ENCODE measurements at regions of chr1 and their contacts with region 1.

Region 1: GRCh38 chr1:95233737-95234500 is at the start of gene RWDD3:
- DNase-seq: peak; percentile 65 to 88
- ATAC-seq: peak; percentile 95 to 97
- H3K4me3 ChIP-seq: peak within 1 kb of the TSS; percentile 98
- H3K27ac ChIP-seq: peak within 1 kb of the TSS; percentile 92 to 100
- H3K4me1 ChIP-seq: peaks cover 16% of the 10 kb centered on the region
- CTCF ChIP-seq: peak; percentile 69
- EP300 ChIP-seq: no peak
- POLR2A ChIP-seq: peak; percentile 68
- RAD21 ChIP-seq: peak; percentile 67 to 89; a peak in 4 of 5 replicates
- polyA plus RNA-seq, gene RWDD3: 15.7 and 22.1 TPM in 2 replicates

Region 2: DNA sequence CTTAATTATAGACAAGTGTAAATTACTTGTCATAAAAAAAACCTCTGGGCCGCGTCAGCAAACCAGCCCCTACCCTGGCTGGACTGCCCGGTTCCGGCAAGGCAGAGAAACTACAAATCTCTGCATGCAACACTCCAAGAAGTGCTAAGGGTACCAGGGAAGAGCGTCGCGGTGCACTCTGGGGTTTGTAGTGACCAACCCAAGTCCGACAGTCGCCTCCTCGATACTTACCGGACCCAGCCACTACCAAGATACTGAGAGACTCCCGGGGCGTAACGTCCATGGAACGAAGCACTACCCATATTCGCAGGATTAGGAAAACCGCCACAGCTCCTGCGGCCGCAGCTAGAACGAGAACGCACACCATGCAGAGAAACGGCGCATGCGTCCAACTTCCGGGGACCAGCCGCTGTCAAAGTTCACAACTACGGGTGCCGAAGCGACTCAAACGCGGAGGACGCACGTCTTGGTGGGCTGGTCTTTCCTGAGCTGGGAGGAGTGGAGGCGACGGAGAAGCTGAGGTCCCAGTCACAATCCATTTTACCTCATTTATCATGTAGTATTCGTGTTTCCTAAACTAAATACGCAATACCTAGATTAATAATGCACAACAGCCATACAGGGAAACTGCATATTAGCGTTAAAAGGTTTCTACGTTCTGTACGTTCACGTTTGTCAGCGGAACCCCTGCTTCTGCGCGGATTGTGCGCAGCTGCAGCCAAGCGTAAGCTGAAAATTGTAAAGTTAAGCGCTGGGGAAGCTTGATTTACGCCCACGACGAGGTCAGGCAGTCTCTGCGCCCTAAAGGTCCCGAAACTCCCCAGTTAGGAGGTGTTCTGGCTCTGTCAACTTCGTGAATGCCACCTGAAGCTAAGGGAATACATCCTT is 161.1 kb before region 1 on chr1 and contains the start of gene ALG14:
- CTCF ChIA-PET with region 1: interaction called, 10 read pairs
- POLR2A ChIA-PET with region 1: interaction called, 31 read pairs
- DNase-seq: peak; percentile 83 to 95
- ATAC-seq: peak; percentile 99
- H3K4me3 ChIP-seq: peak within 1 kb of the TSS; percentile 62
- H3K27ac ChIP-seq: peak within 1 kb of the TSS; percentile 98 to 100
- H3K4me1 ChIP-seq: peaks cover 27% of the 10 kb centered on the region
- CTCF ChIP-seq: no peak
- EP300 ChIP-seq: no peak
- POLR2A ChIP-seq: peak; percentile 56
- RAD21 ChIP-seq: no peak; a peak in 2 of 5 replicates
- polyA plus RNA-seq, gene ALG14: 5.0 and 5.3 TPM in 2 replicates

Region 3: DNA sequence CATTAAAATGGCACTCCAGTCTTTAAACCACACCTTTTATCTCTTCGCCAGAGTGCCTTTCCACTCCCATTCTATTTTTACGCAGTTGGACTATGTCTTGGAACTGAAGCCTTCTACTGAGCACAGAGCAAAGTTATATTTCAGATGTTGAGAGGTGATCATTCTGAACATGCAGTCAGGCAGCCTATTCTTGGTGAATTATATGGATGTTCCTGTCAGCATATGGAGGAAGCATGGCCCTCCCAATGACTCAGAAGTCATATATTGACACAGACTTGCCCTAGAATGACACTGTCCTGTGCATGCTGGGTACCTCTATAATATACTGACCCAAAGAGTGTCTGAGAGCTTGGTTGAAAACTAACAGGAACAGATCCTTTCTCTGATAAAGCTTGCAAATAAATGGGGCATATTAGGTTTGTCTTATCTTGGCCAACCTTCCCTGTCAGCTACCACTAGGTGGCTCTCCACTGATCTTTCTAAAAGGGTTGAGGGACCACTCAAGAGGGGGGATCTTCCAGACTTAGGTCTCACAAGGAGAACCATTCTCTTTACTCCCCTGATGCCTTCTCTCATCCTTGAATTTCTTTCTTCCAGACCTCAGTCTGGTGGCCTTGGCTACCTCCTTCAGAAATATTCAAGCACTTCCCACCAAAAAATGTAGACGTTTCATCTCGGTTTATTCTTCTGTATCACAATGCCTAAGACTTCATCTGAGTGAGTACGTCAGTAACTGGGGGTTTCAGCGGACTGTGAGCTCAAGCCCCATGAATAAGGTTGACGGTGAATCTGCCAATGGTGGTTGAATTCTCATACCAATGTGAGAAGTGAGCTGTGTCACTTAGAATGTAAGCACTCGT is 149.4 kb before region 1 on chr1:
- CTCF ChIA-PET with region 1: interaction called, 14 read pairs
- POLR2A ChIA-PET with region 1: interaction called, 6 read pairs
- DNase-seq: peak; percentile 46 to 55
- ATAC-seq: peak; percentile 48 to 64; a peak in 3 of 6 replicates
- H3K4me3 ChIP-seq: no peak overlapping the region
- H3K27ac ChIP-seq: peak overlapping the region; percentile 36 to 81; a peak in 4 of 6 replicates
- H3K4me1 ChIP-seq: peaks cover 53% of the 10 kb centered on the region
- CTCF ChIP-seq: peak; percentile 49
- EP300 ChIP-seq: no peak
- POLR2A ChIP-seq: no peak
- RAD21 ChIP-seq: peak; percentile 27 to 45; a peak in 3 of 5 replicates

Region 4: DNA sequence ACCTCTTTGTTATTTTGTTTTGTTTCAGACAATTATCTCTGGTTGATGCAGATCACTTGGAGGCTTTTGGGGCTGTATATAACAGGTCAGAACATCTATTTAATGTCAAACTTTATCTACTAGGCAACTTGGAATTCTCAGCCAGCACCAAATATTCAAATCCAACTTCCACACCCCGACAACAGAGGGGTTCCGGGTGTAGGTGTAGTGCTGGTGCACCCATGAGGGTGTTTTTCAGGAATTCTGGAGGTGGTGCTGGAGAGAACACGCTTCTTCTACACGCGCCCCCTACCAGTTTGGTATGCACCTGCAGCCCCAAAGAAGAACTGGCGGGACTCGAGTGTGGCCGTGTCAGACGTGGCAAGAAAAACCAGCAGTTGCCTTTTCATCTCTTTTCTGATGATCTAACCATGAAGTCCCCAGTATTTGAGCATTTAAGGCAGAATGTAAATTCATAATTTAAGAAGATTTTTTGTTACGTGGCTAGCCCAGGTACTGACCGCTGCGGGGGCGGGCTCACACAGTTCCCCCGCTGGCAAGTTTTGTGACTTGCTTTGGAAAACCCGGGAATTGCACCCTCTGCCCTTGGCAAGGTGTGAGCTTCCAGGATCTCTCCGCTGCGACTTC is 117.2 kb before region 1 on chr1:
- CTCF ChIA-PET with region 1: interaction called, 20 read pairs
- POLR2A ChIA-PET with region 1: interaction called, 26 read pairs
- DNase-seq: peak; percentile 74 to 80
- ATAC-seq: peak; percentile 92 to 93
- H3K4me3 ChIP-seq: peak overlapping the region; percentile 99
- H3K27ac ChIP-seq: peak overlapping the region; percentile 97 to 100
- H3K4me1 ChIP-seq: peaks cover 33% of the 10 kb centered on the region
- CTCF ChIP-seq: peak; percentile 61
- EP300 ChIP-seq: no peak
- POLR2A ChIP-seq: no peak
- RAD21 ChIP-seq: peak; percentile 46 to 54; a peak in 4 of 5 replicates

Region 5: GRCh38 chr1:95139039-95139438 is 94.9 kb before region 1 on chr1:
- CTCF ChIA-PET with region 1: interaction called, 5 read pairs
- POLR2A ChIA-PET with region 1: interaction called, 13 read pairs
- DNase-seq: peak in 1 of 2 experiments; percentile 3
- ATAC-seq: peak; percentile 51 to 70; a peak in 4 of 6 replicates
- H3K4me3 ChIP-seq: no peak overlapping the region
- H3K27ac ChIP-seq: no peak overlapping the region
- H3K4me1 ChIP-seq: peaks cover 6% of the 10 kb centered on the region; the same call in 1 of the 3 replicates
- CTCF ChIP-seq: no peak
- EP300 ChIP-seq: no peak
- POLR2A ChIP-seq: no peak
- RAD21 ChIP-seq: no peak

Region 6: GRCh38 chr1:95169544-95169943 is 64.4 kb before region 1 on chr1:
- CTCF ChIA-PET with region 1: interaction called, 3 read pairs
- POLR2A ChIA-PET with region 1: interaction called, 10 read pairs
- DNase-seq: peak; percentile 20 to 90
- ATAC-seq: peak; percentile 95 to 100
- H3K4me3 ChIP-seq: no peak overlapping the region
- H3K27ac ChIP-seq: peak overlapping the region; percentile 93 to 94
- H3K4me1 ChIP-seq: peaks cover 68% of the 10 kb centered on the region
- CTCF ChIP-seq: no peak
- EP300 ChIP-seq: peak in 1 of 2 experiments; percentile 62; a peak in 1 of 5 replicates
- POLR2A ChIP-seq: no peak
- RAD21 ChIP-seq: no peak

Region 7: DNA sequence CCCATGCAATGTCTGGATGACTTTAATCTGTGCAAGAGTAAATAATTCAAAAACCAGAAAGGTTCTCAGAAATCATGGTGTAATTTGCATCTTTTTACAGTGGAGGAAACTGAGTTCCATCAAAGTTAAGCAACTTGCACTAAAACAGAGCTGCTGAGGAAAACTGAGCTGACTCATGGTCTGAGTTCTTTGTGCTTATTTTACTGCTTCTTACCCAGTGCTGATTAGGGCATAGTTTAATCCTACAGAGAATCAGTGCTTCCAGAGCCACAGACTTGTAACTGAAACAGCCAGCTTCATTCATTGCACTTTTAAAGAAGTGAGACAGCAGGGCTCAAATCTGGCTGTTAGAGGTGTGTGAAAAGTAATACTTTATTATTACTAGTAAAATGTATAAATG is 10.8 kb before region 1 on chr1:
- CTCF ChIA-PET with region 1: interaction called, 14 read pairs
- POLR2A ChIA-PET with region 1: interaction called, 13 read pairs
- DNase-seq: no peak
- ATAC-seq: peak in 1 of 2 experiments; percentile 47; a peak in 1 of 6 replicates
- H3K4me3 ChIP-seq: no peak overlapping the region
- H3K27ac ChIP-seq: peak overlapping the region in 1 of 2 experiments; percentile 33; a peak in 1 of 6 replicates
- H3K4me1 ChIP-seq: peaks cover 12% of the 10 kb centered on the region; the same call in 2 of the 3 replicates
- CTCF ChIP-seq: no peak
- EP300 ChIP-seq: no peak
- POLR2A ChIP-seq: no peak
- RAD21 ChIP-seq: no peak